GM18951 (cell line): ENCODE measurements at regions of chr14 and their contacts with region 1.

Region 1: DNA sequence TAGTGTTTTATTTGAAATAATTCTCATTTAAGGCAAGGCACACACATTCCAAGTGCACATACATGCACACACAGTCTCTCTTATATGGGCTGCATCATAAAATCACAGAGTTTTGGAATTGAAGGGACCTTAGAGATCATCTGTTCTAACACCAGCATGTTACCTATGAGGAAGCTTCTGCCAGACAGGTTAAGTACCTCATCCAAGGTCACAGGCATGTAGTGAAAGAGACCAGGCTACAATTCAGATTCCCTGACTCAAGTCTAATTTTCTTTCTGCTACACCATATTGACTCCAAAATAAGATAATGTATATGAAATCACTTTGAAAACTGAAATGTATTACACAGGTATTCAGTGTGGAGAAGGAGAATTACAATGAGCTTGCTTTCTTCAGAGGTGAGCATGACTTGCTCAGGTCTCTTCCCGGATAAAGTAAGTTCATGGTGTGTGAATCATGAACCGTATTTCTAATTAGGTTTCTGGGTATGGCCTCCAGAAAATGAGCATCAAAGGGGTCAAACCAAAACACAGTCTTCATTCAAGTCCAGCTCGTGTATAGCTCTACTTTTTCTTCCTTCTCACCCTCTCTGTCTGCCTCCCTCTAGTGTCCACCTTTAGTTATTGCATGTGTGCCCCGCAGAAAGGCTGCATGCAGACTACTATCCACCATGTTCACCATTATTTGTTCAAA is 411.9 kb downstream of the FUT8 start:
- POLR2A ChIP-seq: no peak

Region 2: DNA sequence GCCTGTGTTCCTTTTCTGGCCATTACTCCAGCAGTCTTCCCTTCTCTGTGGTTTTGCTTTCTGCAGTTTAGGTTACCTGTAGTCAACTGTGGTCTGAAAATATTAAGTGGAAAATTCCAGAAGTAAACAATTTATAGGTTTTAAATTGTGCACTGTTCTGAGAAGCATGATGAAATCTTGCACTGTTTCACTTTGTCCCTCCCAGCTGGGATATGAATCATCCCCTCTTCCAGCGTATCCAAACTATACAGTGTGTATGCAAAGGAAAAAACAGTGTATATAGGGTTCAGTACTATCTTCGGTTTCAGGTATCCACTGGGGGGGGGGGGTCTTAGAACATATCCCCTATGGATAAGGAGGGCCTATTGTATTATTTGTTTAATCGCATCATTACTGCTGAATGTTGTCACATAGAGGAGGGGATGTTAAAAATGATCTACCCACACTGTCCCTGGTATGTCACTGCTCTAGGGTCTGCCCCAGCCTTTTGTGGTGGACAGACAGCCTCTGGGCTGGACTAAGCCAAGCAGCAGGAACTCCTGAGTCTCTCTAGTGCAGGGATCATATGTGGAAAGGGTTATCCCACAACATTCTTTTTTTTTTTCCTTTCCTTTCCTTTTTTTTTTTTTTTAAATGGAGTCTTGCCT is 613.0 kb before region 1 on chr14:
- in situ Hi-C with region 1: no loop called
- POLR2A ChIP-seq: no peak

Region 3: GRCh38 chr14:65222440-65222858 is 602.0 kb before region 1 on chr14:
- in situ Hi-C with region 1: loop called (anchors 10 kb)
- POLR2A ChIP-seq: no peak

Region 4: DNA sequence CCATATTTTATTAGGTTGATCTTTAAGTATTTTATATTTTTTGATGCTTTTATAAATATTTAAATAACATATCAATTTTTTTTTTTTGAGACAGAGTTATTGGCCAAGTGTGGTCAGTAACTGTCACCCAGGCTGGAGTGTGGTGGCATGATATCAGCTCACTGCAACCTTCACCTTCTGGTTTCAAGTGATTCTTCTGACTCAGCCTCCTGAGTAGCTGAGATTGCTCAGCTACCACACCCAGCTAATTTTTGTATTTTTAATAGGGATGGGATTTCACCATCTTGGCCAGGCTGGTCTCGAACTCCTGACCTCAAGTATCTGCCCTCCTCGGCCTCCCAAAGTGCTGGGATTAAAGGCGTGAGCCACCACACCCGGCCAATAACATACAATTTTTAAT is 340.8 kb before region 1 on chr14:
- in situ Hi-C with region 1: loop called (anchors 10 kb)
- POLR2A ChIP-seq: no peak